ENCODE measurements at regions of chr3 and their contacts with region 1.

Region 1: DNA sequence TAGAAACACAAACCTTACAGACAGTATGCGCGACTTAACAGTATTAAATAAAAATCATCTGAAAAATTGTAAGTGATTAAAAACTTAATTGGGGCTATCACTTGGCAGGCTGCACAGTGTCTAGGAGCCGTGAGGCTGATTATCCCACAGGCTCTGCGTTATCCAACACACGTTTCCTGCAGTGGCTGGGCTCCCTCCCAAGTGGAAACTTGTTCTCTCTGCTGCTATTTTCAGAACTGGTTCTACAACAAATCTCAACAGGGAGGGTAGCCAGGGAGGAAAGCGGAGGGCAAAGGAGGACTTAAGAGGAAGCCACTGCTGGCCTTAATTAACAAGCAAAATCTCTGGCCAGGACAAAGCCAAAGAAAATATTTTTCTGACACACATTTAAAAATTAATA is 555.2 kb downstream of the MAGI1 start:
- DNase-seq: peak in 39 of 42 donors; percentile 8 to 75 (median 47)

Region 2: GRCh38 chr3:65597226-65597951 is 113.9 kb after region 1 on chr3:
- intact Hi-C with region 1: loop called (anchors 10 kb)
- DNase-seq: peak; percentile 58 to 90 (median 79)

Measured in head of caudate nucleus (tissue), 42 donors.